K562 (cell line): ENCODE measurements at regions of chr5 and their contacts with region 1.

Region 1: GRCh38 chr5:56070851-56071465 is 76.2 kb upstream of the IL6ST start:
- DNase-seq: no peak
- ATAC-seq: no peak
- H3K4me3 ChIP-seq: no peak overlapping the region
- H3K27ac ChIP-seq: no peak overlapping the region
- H3K4me1 ChIP-seq: peaks cover 0 to 6% of the 10 kb centered on the region in 2 experiments; a peak in 2 of 5 replicates
- H3K27me3 ChIP-seq: no peaks in the 10 kb centered on the region
- CTCF ChIP-seq: no peak
- EP300 ChIP-seq: no peak
- POLR2A ChIP-seq: no peak
- RAD21 ChIP-seq: no peak

Region 2: GRCh38 chr5:55936100-55936693 is 134.8 kb before region 1 on chr5:
- CTCF ChIA-PET with region 1: interaction called, 4 read pairs
- POLR2A ChIA-PET with region 1: no interaction called
- in situ Hi-C with region 1: loop called (anchors 10 kb)
- intact Hi-C with region 1: loop called (anchors 1 kb)
- DNase-seq: peak; percentile 68 to 86 (median 73)
- ATAC-seq: peak; percentile 96
- H3K4me3 ChIP-seq: no peak overlapping the region
- H3K27ac ChIP-seq: no peak overlapping the region
- H3K4me1 ChIP-seq: no peaks in the 10 kb centered on the region; a peak in 1 of 5 replicates
- H3K27me3 ChIP-seq: no peaks in the 10 kb centered on the region
- CTCF ChIP-seq: peak; percentile 91 to 97 (median 97)
- EP300 ChIP-seq: no peak
- POLR2A ChIP-seq: no peak
- RAD21 ChIP-seq: peak; percentile 87

Region 3: DNA sequence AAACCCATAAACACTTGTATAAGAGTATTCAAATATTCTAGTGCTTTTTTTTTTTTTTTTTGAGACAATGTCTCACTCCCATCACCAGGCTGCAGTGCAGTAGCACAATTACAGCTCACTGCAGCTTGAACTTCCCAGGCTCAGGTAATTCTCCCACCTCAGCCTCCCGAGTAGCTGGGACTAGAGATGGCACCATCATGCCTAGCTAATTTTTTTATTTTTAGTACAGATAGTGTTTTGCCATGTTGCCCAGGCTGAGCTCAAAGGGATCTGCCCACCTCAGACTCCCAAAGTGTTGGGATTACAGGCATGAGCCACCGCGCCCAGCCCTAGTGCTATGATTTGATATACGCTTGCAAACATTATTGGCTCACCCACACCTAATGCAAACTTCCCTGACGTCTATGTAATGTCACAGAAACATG is 88.0 kb before region 1 on chr5:
- CTCF ChIA-PET with region 1: interaction called, 7 read pairs
- POLR2A ChIA-PET with region 1: no interaction called
- in situ Hi-C with region 1: no loop called
- intact Hi-C with region 1: loop called (anchors 1 kb)
- DNase-seq: no peak
- ATAC-seq: peak; percentile 62
- H3K4me3 ChIP-seq: no peak overlapping the region
- H3K27ac ChIP-seq: no peak overlapping the region
- H3K4me1 ChIP-seq: no peaks in the 10 kb centered on the region
- H3K27me3 ChIP-seq: no peaks in the 10 kb centered on the region
- CTCF ChIP-seq: peak; percentile 20 to 51 (median 29); a peak in 2 of 6 replicates
- EP300 ChIP-seq: no peak
- POLR2A ChIP-seq: no peak
- RAD21 ChIP-seq: peak; percentile 40 to 55

Region 4: GRCh38 chr5:55994574-55995333 is 76.2 kb before region 1 on chr5 and contains the start of gene IL6ST:
- CTCF ChIA-PET with region 1: interaction called, 3 read pairs
- POLR2A ChIA-PET with region 1: no interaction called
- in situ Hi-C with region 1: no loop called
- intact Hi-C with region 1: loop called (anchors 2 kb)
- DNase-seq: peak; percentile 97 to 98 (median 98)
- ATAC-seq: peak; percentile 98
- H3K4me3 ChIP-seq: peak within 1 kb of the TSS; percentile 90
- H3K27ac ChIP-seq: peak within 1 kb of the TSS; percentile 90
- H3K4me1 ChIP-seq: peaks cover 16 to 33% of the 10 kb centered on the region in 2 experiments
- H3K27me3 ChIP-seq: no peaks in the 10 kb centered on the region
- CTCF ChIP-seq: peak in 2 of 3 experiments; percentile 33 to 37; a peak in 3 of 6 replicates
- EP300 ChIP-seq: no peak
- POLR2A ChIP-seq: peak; percentile 89
- RAD21 ChIP-seq: no peak; a peak in 1 of 4 replicates
- polyA plus RNA-seq, gene IL6ST: 2.0 to 2.3 TPM

Region 5: DNA sequence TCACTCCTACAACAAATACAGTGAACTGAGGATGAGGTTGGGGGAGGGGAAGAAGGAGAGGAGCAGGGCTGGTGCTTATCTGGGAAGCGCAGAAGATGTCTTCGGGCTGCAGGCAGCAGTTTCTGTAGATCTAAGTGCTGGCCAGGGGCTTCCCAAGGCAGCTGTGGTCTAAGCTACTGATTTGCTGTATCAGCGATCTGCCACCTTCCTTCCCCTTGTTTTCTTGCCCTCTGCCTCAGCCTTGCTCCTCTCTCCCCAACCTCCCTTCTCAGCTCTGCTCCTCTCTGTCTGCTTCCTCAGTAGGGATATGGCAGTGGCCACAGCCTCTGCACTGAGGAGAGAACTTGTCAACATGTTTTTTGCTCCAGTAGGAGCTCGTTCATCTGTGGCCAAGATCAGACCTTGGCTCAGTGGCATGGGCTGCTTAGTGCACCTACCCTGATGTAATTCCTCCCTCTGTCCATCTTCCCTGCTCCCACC is 33.4 kb before region 1 on chr5:
- CTCF ChIA-PET with region 1: no interaction called
- POLR2A ChIA-PET with region 1: no interaction called
- in situ Hi-C with region 1: no loop called
- intact Hi-C with region 1: loop called (anchors 2 kb)
- DNase-seq: peak; percentile 87 to 95 (median 90)
- ATAC-seq: peak; percentile 95
- H3K4me3 ChIP-seq: no peak overlapping the region
- H3K27ac ChIP-seq: peak overlapping the region; percentile 86
- H3K4me1 ChIP-seq: peaks cover 14 to 25% of the 10 kb centered on the region in 2 experiments
- H3K27me3 ChIP-seq: no peaks in the 10 kb centered on the region
- CTCF ChIP-seq: no peak
- EP300 ChIP-seq: peak; percentile 96
- POLR2A ChIP-seq: no peak
- RAD21 ChIP-seq: peak in 1 of 2 experiments; percentile 32; a peak in 1 of 4 replicates

Region 6: GRCh38 chr5:56056875-56057274 is 14.1 kb before region 1 on chr5:
- CTCF ChIA-PET with region 1: no interaction called
- POLR2A ChIA-PET with region 1: interaction called, 10 read pairs
- in situ Hi-C with region 1: no loop called
- intact Hi-C with region 1: no loop called
- DNase-seq: no peak
- ATAC-seq: no peak
- H3K4me3 ChIP-seq: no peak overlapping the region
- H3K27ac ChIP-seq: no peak overlapping the region
- H3K4me1 ChIP-seq: peaks cover 3 to 13% of the 10 kb centered on the region in 2 experiments; a peak in 4 of 5 replicates
- H3K27me3 ChIP-seq: no peaks in the 10 kb centered on the region
- CTCF ChIP-seq: no peak
- EP300 ChIP-seq: no peak
- POLR2A ChIP-seq: no peak
- RAD21 ChIP-seq: no peak

Region 7: DNA sequence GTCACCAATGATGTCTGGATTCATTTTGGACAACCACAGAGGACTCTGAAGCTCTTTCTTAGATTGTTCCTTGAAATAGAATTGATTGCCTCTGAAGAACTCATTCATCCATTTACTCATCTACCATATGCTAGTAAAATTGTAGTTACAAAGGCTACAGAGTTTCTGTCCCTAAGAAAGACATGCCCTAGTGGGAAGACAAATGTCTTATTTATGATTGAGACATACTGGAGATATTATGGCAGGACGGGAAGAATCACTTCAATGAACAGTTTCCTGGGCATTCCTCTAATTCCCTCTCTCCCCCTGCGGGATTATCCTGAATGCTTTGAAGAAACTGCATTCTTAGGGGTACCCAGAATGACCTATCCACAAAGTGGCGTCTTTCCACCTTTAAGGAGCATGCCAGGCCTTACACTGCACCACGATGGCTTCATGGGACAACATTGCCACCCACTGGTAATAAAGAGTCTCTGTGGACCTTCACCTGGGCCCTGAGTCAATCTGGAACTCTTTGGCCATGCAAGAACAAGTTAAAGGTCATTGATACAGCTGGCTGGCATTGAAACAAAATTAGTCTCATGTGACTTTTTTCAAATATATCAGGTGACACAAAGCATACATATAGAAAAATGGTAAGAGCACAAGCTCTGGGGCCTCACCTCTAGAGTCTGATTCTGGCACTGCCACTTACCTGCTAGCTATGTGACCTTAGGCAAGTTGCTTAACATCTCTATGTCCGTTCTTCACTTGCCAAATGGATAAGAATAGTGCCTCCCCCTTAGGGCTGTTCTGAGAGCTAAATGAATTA is 130.1 kb after region 1 on chr5:
- CTCF ChIA-PET with region 1: no interaction called
- POLR2A ChIA-PET with region 1: no interaction called
- in situ Hi-C with region 1: no loop called
- intact Hi-C with region 1: loop called (anchors 1 kb)
- DNase-seq: peak; percentile 38 to 81 (median 56)
- ATAC-seq: peak; percentile 100
- H3K4me3 ChIP-seq: no peak overlapping the region
- H3K27ac ChIP-seq: no peak overlapping the region
- H3K4me1 ChIP-seq: peaks cover 0 to 8% of the 10 kb centered on the region in 2 experiments; a peak in 2 of 5 replicates
- H3K27me3 ChIP-seq: no peaks in the 10 kb centered on the region
- CTCF ChIP-seq: peak; percentile 82 to 93 (median 93)
- EP300 ChIP-seq: no peak
- POLR2A ChIP-seq: no peak
- RAD21 ChIP-seq: peak; percentile 97 to 99